GM12878 (cell line): ENCODE measurements at regions of chr1 and their contacts with region 1.

Region 1: DNA sequence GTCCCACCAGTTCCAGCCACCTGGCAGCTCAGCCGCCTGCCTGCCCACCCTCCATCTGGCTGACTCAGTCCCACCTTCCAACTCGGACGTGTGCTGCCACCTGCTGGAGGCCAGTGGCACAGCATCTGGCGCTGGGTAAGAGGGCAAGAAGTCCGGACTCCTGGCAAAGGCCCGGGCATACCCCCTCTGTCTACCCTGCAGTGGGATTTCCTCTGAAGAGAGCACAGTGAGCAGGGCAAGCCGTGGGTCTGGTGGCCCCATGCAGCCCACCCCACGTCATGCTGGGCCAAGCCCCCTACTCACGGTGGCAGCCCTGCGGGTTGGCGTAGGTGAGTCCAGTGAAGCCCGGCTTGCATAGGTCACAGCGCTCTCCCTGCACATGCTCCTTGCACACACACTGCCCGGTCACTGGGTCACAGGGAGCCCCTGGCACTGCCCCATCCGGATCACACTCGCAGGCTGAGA is 24.5 kb downstream of the LAMB3 start:
- DNase-seq: no peak
- ATAC-seq: peak; percentile 95
- H3K4me3 ChIP-seq: no peak overlapping the region
- H3K27ac ChIP-seq: no peak overlapping the region
- H3K4me1 ChIP-seq: no peaks in the 10 kb centered on the region
- H3K27me3 ChIP-seq: no peaks in the 10 kb centered on the region
- CTCF ChIP-seq: peak; percentile 98 to 99 (median 98); a peak in 5 of 6 replicates
- EP300 ChIP-seq: no peak
- POLR2A ChIP-seq: no peak
- RAD21 ChIP-seq: peak; percentile 96

Region 2: GRCh38 chr1:209411491-209411929 is 216.3 kb before region 1 on chr1:
- CTCF ChIA-PET with region 1: no interaction called
- POLR2A ChIA-PET with region 1: no interaction called
- RAD21 ChIA-PET with region 1: no interaction called
- SMC1A ChIA-PET with region 1: no interaction called
- in situ Hi-C with region 1: no loop called
- intact Hi-C with region 1: no loop called
- DNase-seq: no peak
- ATAC-seq: no peak
- H3K4me3 ChIP-seq: no peak overlapping the region
- H3K27ac ChIP-seq: no peak overlapping the region
- H3K4me1 ChIP-seq: no peaks in the 10 kb centered on the region
- H3K27me3 ChIP-seq: 0 out of 4 replicates have a peak, but pooled peaks cover 0 to 2% of the 10 kb centered on the region in 2 experiments
- CTCF ChIP-seq: no peak
- EP300 ChIP-seq: no peak
- POLR2A ChIP-seq: no peak
- RAD21 ChIP-seq: no peak

Region 3: GRCh38 chr1:209576798-209577197 is 51.0 kb before region 1 on chr1:
- CTCF ChIA-PET with region 1: interaction called, 14 read pairs
- POLR2A ChIA-PET with region 1: interaction called, 3 read pairs
- RAD21 ChIA-PET with region 1: interaction called, 7 read pairs
- SMC1A ChIA-PET with region 1: interaction called, 12 read pairs
- in situ Hi-C with region 1: loop called (anchors 10 kb)
- intact Hi-C with region 1: loop called (anchors 1 kb)
- DNase-seq: peak; percentile 12
- ATAC-seq: peak; percentile 99
- H3K4me3 ChIP-seq: no peak overlapping the region
- H3K27ac ChIP-seq: no peak overlapping the region
- H3K4me1 ChIP-seq: no peaks in the 10 kb centered on the region
- H3K27me3 ChIP-seq: peaks cover under 1 to 1% of the 10 kb centered on the region in 2 experiments; a peak in 3 of 4 replicates
- CTCF ChIP-seq: peak; percentile 93 to 96 (median 94)
- EP300 ChIP-seq: no peak
- POLR2A ChIP-seq: no peak
- RAD21 ChIP-seq: peak; percentile 86

Region 4: GRCh38 chr1:209601809-209602657 is 25.7 kb before region 1 on chr1:
- CTCF ChIA-PET with region 1: interaction called, 211 read pairs
- POLR2A ChIA-PET with region 1: no interaction called
- RAD21 ChIA-PET with region 1: interaction called, 22 read pairs
- SMC1A ChIA-PET with region 1: interaction called, 17 read pairs
- in situ Hi-C with region 1: no loop called
- intact Hi-C with region 1: loop called (anchors 2 kb)
- DNase-seq: no peak
- ATAC-seq: peak; percentile 95
- H3K4me3 ChIP-seq: no peak overlapping the region
- H3K27ac ChIP-seq: no peak overlapping the region
- H3K4me1 ChIP-seq: peaks cover under 1% of the 10 kb centered on the region; the same call in 1 of the 2 replicates
- H3K27me3 ChIP-seq: no peaks in the 10 kb centered on the region
- CTCF ChIP-seq: peak; percentile 64 to 82 (median 70); a peak in 5 of 6 replicates
- EP300 ChIP-seq: no peak
- POLR2A ChIP-seq: no peak
- RAD21 ChIP-seq: peak; percentile 67

Region 5: DNA sequence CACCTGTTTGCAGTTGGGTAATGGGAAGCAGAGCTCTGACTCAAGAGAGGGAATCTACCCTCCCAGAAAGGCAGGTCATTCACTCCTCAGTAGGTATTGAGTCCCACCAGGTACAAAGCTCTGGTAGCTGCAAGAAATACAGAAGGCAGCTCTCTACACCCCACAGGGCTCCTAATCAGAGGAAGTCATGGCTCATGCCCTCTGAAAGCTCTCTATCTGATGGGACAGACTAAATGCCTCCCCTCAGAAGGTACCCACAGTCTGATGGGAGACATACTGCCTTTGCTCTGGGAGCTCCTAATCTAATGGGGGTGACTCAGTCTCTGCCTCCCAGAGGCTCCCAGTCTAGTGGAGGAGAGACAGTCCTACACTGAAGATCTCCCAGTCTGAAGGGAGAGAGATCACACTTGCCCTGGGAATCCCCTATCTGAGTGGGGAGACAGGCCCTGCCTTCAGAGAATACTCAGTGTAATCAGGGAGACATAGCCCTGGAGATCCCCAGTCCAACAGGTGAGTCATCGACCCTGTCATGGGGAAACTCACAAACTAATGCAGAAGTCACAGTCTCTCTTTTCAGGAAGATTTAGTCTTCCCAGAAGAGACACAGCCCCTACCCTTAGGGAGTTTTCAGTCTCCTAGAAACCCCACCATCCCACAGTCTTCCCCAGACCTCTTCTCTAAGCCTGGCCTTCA is 20.5 kb before region 1 on chr1:
- CTCF ChIA-PET with region 1: interaction called, 211 read pairs
- POLR2A ChIA-PET with region 1: interaction called, 6 read pairs
- RAD21 ChIA-PET with region 1: interaction called, 22 read pairs
- SMC1A ChIA-PET with region 1: interaction called, 17 read pairs
- in situ Hi-C with region 1: no loop called
- intact Hi-C with region 1: loop called (anchors 2 kb)
- DNase-seq: peak; percentile 48
- ATAC-seq: peak; percentile 93
- H3K4me3 ChIP-seq: no peak overlapping the region
- H3K27ac ChIP-seq: peak overlapping the region; percentile 45; the same call in 1 of the 2 replicates
- H3K4me1 ChIP-seq: peaks cover 10% of the 10 kb centered on the region
- H3K27me3 ChIP-seq: no peaks in the 10 kb centered on the region
- CTCF ChIP-seq: no peak
- EP300 ChIP-seq: no peak
- POLR2A ChIP-seq: no peak
- RAD21 ChIP-seq: no peak

Region 6: DNA sequence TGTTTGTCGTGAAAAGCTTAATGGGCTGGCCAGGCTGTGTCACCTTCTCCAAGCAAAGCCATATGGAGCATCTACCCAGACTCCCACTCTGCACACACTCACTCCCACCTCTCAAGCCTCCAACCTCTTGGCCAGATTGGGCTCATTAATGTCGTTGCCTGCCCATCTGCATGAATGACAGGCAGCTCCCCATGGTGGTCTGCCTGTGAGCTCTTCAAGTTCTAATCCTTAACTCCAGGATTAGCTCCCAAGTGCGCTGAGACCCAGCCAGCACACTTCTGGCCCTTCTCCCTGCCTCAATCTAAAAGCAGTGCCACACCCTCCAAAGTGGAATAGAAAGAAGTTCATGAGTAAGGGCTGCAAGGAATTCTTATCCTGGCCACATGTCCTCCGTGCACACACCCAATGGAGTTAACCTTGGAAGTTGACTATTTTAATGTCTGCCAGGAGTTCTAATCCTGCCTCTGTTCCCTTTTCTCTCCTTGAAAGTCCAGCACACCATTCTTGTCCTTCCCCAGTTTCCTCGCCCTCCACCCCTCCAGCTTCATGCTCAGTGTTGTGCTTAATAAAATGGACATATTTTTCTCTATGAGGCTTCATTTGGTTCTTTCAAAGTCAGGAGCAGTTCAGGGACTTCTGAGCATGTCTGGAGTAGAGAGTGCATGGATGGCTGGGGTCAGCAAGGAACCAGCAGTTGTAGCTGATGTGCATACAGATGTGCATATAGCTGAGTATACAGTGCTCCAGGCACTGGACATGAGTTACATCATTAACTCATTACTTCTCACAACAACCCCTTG is 14.2 kb before region 1 on chr1:
- CTCF ChIA-PET with region 1: interaction called, 211 read pairs
- POLR2A ChIA-PET with region 1: interaction called, 6 read pairs
- RAD21 ChIA-PET with region 1: interaction called, 10 read pairs
- SMC1A ChIA-PET with region 1: interaction called, 12 read pairs
- in situ Hi-C with region 1: no loop called
- intact Hi-C with region 1: no loop called
- DNase-seq: no peak
- ATAC-seq: no peak
- H3K4me3 ChIP-seq: no peak overlapping the region
- H3K27ac ChIP-seq: no peak overlapping the region
- H3K4me1 ChIP-seq: no peaks in the 10 kb centered on the region
- H3K27me3 ChIP-seq: peaks cover 1 to 7% of the 10 kb centered on the region in 2 experiments; a peak in 3 of 4 replicates
- CTCF ChIP-seq: no peak
- EP300 ChIP-seq: no peak
- POLR2A ChIP-seq: no peak
- RAD21 ChIP-seq: no peak

Region 7: DNA sequence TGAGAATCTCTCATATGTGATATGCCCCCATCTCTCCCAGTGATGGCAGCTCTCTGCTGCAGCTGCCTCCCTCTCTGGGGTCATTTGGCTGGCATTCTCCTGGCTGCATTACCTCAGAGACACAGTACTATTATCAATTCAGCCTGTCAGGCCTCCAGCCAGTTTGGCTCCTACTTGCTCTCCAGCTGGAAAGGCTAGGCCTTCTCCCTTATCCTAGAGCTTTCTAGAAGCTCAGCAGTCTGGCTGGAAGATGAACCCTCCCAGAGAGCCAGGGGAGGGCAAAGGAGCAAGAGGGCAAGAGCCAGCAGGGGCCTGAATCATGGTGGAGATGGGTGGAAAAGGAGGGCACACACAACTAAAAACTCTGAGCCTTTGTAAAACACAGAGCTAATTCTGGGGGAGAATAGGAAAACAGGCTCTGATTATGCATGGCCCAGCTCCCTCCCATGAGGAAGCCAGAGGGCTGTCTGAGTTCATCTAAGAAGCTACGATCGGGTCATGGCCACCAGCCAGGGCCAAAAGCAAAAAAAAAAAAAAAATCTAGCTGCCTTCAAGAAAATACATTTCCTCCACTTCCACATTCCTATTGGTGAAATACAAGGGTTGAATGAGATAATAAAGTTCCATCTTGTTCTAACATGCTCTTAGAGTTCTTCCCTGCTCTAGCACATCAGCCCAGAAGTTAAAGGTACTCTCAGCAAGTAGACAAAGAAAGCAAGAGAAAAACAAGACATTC is 15.7 kb after region 1 on chr1:
- CTCF ChIA-PET with region 1: interaction called, 15 read pairs
- POLR2A ChIA-PET with region 1: interaction called, 4 read pairs
- RAD21 ChIA-PET with region 1: interaction called, 5 read pairs
- SMC1A ChIA-PET with region 1: interaction called, 22 read pairs
- in situ Hi-C with region 1: no loop called
- intact Hi-C with region 1: no loop called
- DNase-seq: no peak
- ATAC-seq: no peak
- H3K4me3 ChIP-seq: no peak overlapping the region
- H3K27ac ChIP-seq: no peak overlapping the region
- H3K4me1 ChIP-seq: no peaks in the 10 kb centered on the region
- H3K27me3 ChIP-seq: no peaks in the 10 kb centered on the region; a peak in 1 of 4 replicates
- CTCF ChIP-seq: no peak
- EP300 ChIP-seq: no peak
- POLR2A ChIP-seq: no peak
- RAD21 ChIP-seq: no peak

Region 8: GRCh38 chr1:209692745-209693504 is 65.2 kb after region 1 on chr1:
- CTCF ChIA-PET with region 1: interaction called, 32 read pairs
- POLR2A ChIA-PET with region 1: interaction called, 5 read pairs
- RAD21 ChIA-PET with region 1: interaction called, 3 read pairs
- SMC1A ChIA-PET with region 1: interaction called, 10 read pairs
- in situ Hi-C with region 1: no loop called
- intact Hi-C with region 1: loop called (anchors 1 kb)
- DNase-seq: peak; percentile 34
- ATAC-seq: peak; percentile 89
- H3K4me3 ChIP-seq: no peak overlapping the region
- H3K27ac ChIP-seq: no peak overlapping the region
- H3K4me1 ChIP-seq: no peaks in the 10 kb centered on the region
- H3K27me3 ChIP-seq: no peaks in the 10 kb centered on the region
- CTCF ChIP-seq: peak; percentile 80 to 92 (median 83)
- EP300 ChIP-seq: 0 out of 4 replicates have a peak, but pooled peaks of 1 of the 2 experiments have one; percentile 31
- POLR2A ChIP-seq: no peak
- RAD21 ChIP-seq: peak; percentile 97